ENCODE measurements at regions of chr1 and their contacts with region 1.

Region 1: DNA sequence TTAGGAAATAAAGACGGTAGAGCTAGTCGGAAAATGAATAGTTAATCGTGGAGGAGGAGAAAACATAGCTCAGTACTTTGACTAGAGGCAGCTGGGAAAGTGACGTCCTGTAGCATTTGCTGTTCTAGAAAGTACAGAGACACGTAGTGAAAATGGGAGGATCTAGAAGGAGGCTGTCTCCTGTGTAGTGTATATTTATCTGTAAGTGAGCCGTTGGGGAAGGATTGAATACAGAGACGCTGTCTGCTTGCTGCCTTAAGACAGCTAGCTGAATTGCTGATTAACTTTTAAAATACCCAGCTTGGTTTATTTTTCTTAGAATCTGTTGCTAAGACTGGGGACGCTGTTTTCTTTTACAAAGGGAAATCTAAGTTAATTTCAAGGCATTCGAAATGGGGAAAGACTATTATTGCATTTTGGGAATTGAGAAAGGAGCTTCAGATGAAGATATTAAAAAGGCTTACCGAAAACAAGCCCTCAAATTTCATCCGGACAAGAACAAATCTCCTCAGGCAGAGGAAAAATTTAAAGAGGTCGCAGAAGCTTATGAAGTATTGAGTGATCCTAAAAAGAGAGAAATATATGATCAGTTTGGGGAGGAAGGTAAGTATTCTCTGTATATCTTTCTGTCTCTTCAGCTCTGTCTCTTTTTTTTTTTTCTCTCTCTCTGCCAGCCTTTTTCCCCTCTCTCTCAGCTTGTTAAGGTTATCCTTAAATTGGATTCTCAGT is at the start of gene DNAJB4:
- DNase-seq: peak; percentile 80
- CTCF ChIP-seq: no peak

Region 2: DNA sequence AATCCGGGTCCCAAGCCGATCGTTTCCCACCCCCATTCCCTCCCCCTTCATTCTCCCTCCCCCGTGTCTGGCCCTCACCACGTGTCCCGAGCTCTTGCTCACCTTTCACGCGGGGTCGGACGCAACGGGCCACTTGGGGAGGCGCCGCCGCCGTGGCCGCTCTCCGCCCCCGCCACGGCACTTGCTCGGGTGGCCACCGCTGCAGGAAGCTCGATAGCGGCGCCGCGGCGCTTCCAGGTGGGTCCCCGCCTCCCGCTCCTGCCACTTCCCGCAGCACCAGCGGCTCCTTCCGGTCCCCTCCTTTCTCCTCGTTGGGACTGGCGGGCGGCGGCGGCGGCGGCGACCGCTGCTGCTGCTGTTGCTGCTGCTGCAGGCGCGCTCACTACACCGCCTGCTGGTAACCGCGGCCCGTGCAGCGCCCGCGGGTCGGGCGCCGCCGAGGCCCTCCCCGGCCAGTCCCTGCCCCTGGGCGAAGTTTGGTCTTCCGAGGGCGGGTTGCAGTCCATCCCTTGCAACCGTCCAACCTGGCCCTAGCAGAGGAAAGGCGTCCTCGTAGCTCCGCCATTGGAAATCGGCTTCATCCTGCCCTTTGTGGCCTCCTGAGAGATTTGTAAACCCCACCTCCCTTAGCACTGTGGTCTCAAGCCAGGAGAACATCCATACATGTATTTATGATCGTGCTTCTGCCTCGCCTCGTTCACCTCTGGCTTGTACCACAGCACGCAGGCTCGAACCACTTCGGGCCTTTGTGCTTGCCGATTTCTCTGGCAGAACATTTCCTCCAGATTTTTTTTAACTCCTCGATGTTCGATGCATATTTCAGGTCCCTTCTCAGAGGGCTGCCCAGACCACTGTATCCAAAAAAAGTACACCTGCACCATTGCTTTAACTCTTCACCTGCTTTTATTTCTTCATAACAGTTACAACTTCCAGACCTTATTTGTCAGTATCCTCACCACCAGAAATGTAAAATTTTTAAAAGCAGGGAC is 321.4 kb before region 1 on chr1:
- CTCF ChIA-PET with region 1: no interaction called
- POLR2A ChIA-PET with region 1: interaction called, 15 read pairs
- DNase-seq: peak; percentile 87
- CTCF ChIP-seq: peak; percentile 89

Region 3: GRCh38 chr1:77978969-77979876 is 25.7 kb before region 1 on chr1 and contains the start of gene FUBP1:
- CTCF ChIA-PET with region 1: interaction called, 117 read pairs
- POLR2A ChIA-PET with region 1: interaction called, 146 read pairs
- DNase-seq: peak; percentile 90
- CTCF ChIP-seq: peak; percentile 74

Region 4: GRCh38 chr1:77986810-77987209 is 18.1 kb before region 1 on chr1:
- CTCF ChIA-PET with region 1: interaction called, 117 read pairs
- POLR2A ChIA-PET with region 1: interaction called, 146 read pairs
- DNase-seq: no peak
- CTCF ChIP-seq: no peak

Region 5: GRCh38 chr1:77994117-77994705 is 10.7 kb before region 1 on chr1:
- CTCF ChIA-PET with region 1: interaction called, 13 read pairs
- POLR2A ChIA-PET with region 1: interaction called, 20 read pairs
- DNase-seq: no peak
- CTCF ChIP-seq: no peak

Region 6: DNA sequence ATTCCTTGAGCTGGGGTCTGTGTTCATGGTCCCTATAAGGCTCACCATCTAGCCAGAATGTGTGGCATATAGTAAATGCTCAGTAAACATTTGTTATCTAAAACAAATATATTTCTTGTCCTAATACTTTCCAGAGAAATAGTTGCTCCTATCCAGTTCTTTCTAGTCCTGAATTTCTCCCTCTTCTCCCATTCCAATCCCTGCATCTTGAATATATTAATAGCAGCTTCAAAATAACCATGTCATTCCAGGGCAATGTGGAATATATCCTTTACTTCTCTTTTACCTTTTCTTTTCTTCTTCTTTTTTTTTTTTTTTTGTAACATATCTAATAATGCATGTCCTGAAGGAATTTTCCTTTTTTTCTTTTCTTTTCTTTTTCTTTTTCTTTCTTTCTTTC is 10.3 kb after region 1 on chr1:
- CTCF ChIA-PET with region 1: interaction called, 7 read pairs
- POLR2A ChIA-PET with region 1: interaction called, 21 read pairs
- DNase-seq: no peak
- CTCF ChIP-seq: no peak

Region 7: GRCh38 chr1:78043436-78043835 is 38.6 kb after region 1 on chr1:
- CTCF ChIA-PET with region 1: no interaction called
- POLR2A ChIA-PET with region 1: interaction called, 14 read pairs
- DNase-seq: no peak
- CTCF ChIP-seq: no peak

Region 8: GRCh38 chr1:78054559-78054958 is 49.7 kb after region 1 on chr1:
- CTCF ChIA-PET with region 1: no interaction called
- POLR2A ChIA-PET with region 1: no interaction called
- DNase-seq: no peak
- CTCF ChIP-seq: no peak

Region 9: DNA sequence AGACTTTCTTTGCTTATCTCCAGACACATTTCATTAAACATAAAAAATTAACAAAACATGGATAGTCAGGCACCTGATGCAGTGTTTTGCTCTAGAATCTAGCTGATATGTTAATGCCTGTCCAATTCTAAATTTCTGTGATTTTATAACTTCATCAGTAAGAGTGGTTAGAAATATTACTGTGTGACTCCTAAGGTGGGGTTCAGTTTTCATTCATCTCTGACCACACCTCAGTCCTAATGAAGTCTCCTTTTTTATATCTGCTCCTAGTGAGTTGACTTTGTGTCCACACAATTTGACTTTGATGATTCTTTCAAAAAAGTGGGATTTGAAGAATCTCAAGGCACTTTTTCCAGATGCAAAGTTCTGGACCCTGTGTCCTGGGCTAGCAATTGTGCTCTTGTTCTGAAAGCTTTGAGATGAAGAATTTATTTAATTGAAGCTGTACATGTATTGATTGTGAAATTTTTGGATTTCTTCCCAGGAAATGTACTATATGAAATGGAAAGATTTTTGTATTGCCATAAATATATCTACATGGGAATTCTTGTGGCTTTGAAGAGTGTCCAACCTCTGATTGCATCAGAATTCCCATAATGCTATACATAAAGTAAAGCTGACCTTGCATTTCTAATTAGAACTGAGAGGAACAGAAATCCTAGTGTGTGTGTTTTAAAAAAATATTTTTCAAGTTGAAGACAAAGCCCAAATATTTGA is 152.1 kb after region 1 on chr1:
- CTCF ChIA-PET with region 1: no interaction called
- POLR2A ChIA-PET with region 1: no interaction called
- DNase-seq: no peak
- CTCF ChIP-seq: no peak